MCF 10A (cell line): ENCODE measurements at regions of chr1 and their contacts with region 1.

Region 1: DNA sequence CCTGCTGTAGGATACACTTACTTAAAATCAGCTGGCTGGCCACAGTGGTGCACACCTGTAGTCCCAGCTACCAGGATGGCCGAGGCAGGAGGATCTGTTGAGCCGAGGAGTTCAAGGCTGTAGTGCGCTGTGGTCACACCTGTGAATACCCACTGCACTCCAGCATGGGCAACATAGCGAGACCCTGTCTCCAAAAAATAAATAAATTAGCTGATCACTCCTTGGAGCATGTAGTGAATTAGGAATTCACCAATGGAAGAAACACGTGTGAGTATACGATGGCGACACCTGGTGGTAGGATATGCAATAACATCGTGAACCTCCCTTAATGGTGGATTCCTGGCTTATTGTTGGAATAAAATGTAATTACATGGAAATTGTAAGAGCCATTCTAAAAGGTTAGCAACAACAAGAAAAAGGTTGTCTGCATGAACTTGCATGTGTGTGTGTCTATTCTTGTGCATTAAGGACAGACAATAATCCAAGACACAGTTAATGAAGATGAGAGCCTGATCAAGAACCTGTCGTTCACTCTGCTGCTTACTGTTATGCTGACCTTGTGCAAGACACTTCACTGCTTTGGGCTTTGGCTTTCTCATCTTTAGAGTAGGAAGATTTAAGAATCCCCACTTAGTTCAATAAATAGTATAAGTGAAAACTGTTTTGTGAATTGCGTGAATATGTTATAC is 38.6 kb upstream of the COX20 start:
- DNase-seq: peak; percentile 89
- H3K4me3 Mint-ChIP-seq: no peak overlapping the region
- H3K27ac Mint-ChIP-seq: no peak overlapping the region
- H3K4me1 Mint-ChIP-seq: peaks cover 5% of the 10 kb centered on the region
- H3K27me3 Mint-ChIP-seq: no peaks in the 10 kb centered on the region
- CTCF ChIP-seq: peak; percentile 92

Region 2: GRCh38 chr1:244424649-244425334 is 372.1 kb before region 1 on chr1:
- CTCF ChIA-PET with region 1: interaction called, 11 read pairs
- POLR2A ChIA-PET with region 1: no interaction called
- intact Hi-C with region 1: no loop called
- DNase-seq: no peak
- H3K4me3 Mint-ChIP-seq: no peak overlapping the region
- H3K27ac Mint-ChIP-seq: peak overlapping the region; percentile 17
- H3K4me1 Mint-ChIP-seq: peaks cover 5% of the 10 kb centered on the region
- H3K27me3 Mint-ChIP-seq: no peaks in the 10 kb centered on the region
- CTCF ChIP-seq: no peak

Region 3: DNA sequence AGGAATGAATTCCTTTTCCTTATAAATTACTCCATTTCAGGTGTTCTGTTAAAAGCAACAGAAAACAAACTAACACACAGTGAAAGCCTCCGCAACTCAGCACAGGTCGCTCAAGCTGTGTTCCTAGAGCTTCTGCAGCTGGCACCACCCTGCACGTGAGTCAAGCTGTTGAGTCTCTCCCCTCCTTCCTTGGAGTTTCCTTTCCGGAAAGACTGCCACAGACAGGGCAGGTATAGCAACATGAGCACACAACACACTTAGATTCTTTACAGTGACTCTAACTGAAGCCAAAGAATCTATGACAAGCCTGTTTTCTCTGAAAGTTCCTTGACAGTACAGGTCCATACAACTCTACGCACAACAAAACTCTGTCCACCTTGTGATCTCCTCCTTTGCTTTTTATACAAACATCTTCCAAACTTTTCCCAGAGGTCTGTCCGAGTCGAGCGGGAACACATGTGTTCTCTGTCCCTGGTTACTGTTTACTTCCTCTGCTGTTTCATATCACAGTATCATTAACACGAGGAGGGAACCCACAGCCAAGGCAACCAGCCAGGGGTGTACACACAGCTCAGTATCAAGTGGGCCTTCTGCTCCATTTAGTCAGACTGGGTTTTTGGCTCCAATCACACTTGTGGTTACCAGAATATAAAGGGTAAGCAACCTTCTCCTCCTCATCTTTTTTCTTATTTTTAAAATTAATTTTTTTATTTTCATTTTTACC is 182.6 kb before region 1 on chr1:
- CTCF ChIA-PET with region 1: interaction called, 27 read pairs
- POLR2A ChIA-PET with region 1: no interaction called
- intact Hi-C with region 1: no loop called
- DNase-seq: no peak
- H3K4me3 Mint-ChIP-seq: no peak overlapping the region
- H3K27ac Mint-ChIP-seq: no peak overlapping the region
- H3K4me1 Mint-ChIP-seq: no peaks in the 10 kb centered on the region
- H3K27me3 Mint-ChIP-seq: no peaks in the 10 kb centered on the region
- CTCF ChIP-seq: no peak

Region 4: DNA sequence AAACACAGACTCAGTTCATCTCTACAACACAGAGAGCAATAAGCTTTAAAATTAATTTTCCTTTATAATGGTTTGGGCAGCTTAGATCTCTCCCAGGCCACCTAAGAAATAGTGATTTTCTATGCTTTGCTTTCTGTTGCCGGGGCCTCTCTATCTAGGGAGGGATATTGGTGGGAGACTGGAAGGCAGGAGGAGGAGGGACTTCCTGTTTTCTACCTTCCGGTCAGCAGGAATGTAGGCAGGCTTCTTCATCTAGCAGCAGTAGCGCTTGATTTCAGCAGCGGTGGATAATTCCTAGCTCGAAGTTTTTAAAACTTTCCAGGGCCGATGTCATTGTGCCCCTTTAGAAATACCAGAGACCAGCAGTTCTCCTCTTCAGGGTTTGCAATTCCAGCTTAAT is 149.0 kb before region 1 on chr1:
- CTCF ChIA-PET with region 1: interaction called, 25 read pairs
- POLR2A ChIA-PET with region 1: interaction called, 3 read pairs
- intact Hi-C with region 1: loop called (anchors 1 kb)
- DNase-seq: no peak
- H3K4me3 Mint-ChIP-seq: no peak overlapping the region
- H3K27ac Mint-ChIP-seq: no peak overlapping the region
- H3K4me1 Mint-ChIP-seq: peaks cover 8% of the 10 kb centered on the region
- H3K27me3 Mint-ChIP-seq: peaks cover 8% of the 10 kb centered on the region
- CTCF ChIP-seq: no peak

Region 5: GRCh38 chr1:244778361-244778760 is 18.5 kb before region 1 on chr1:
- CTCF ChIA-PET with region 1: interaction called, 86 read pairs
- POLR2A ChIA-PET with region 1: interaction called, 3 read pairs
- intact Hi-C with region 1: no loop called
- DNase-seq: peak; percentile 92
- H3K4me3 Mint-ChIP-seq: no peak overlapping the region
- H3K27ac Mint-ChIP-seq: no peak overlapping the region
- H3K4me1 Mint-ChIP-seq: peaks cover 9% of the 10 kb centered on the region
- H3K27me3 Mint-ChIP-seq: no peaks in the 10 kb centered on the region
- CTCF ChIP-seq: no peak

Region 6: GRCh38 chr1:244835276-244836134 is 38.6 kb after region 1 on chr1 and contains the start of gene COX20:
- CTCF ChIA-PET with region 1: interaction called, 19 read pairs
- POLR2A ChIA-PET with region 1: interaction called, 6 read pairs
- intact Hi-C with region 1: no loop called
- DNase-seq: peak; percentile 98
- H3K4me3 Mint-ChIP-seq: peak within 1 kb of the TSS; percentile 81
- H3K27ac Mint-ChIP-seq: peak within 1 kb of the TSS; percentile 99
- H3K4me1 Mint-ChIP-seq: peaks cover 33% of the 10 kb centered on the region
- H3K27me3 Mint-ChIP-seq: no peaks in the 10 kb centered on the region
- CTCF ChIP-seq: no peak
- total RNA-seq, gene COX20: 44.6 and 46.1 TPM in 2 replicates